CD14-positive monocyte (primary cell): ENCODE measurements at regions of chr19 and their contacts with region 1.

Region 1: GRCh38 chr19:39889872-39890545 is 43.8 kb upstream of the FBL start:
- DNase-seq: no peak
- H3K4me3 ChIP-seq: no peak overlapping the region
- H3K4me3 Mint-ChIP-seq: no peak overlapping the region
- H3K27ac ChIP-seq: no peak overlapping the region
- H3K27ac Mint-ChIP-seq: no peak overlapping the region
- H3K4me1 ChIP-seq: no peaks in the 10 kb centered on the region
- H3K4me1 Mint-ChIP-seq: no peaks in the 10 kb centered on the region
- H3K27me3 ChIP-seq: peaks cover 0 to 16% of the 10 kb centered on the region in 2 donors
- H3K27me3 Mint-ChIP-seq: peaks cover 30 to 38% (median 32%) of the 10 kb centered on the region in 3 donors
- CTCF ChIP-seq: no peak

Region 2: GRCh38 chr19:39792999-39793546 is 96.9 kb before region 1 on chr19:
- intact Hi-C with region 1: no loop called
- DNase-seq: peak; percentile 42 to 56 (median 53)
- H3K4me3 ChIP-seq: peak overlapping the region; percentile 34 to 83 (median 47)
- H3K4me3 Mint-ChIP-seq: peak overlapping the region; percentile 79
- H3K27ac ChIP-seq: no peak overlapping the region
- H3K27ac Mint-ChIP-seq: no peak overlapping the region
- H3K4me1 ChIP-seq: peaks cover 0 to 6% of the 10 kb centered on the region in 2 donors
- H3K4me1 Mint-ChIP-seq: peaks cover 6% of the 10 kb centered on the region
- H3K27me3 ChIP-seq: peaks cover 0 to 2% of the 10 kb centered on the region in 2 donors
- H3K27me3 Mint-ChIP-seq: peaks cover 7 to 24% (median 11%) of the 10 kb centered on the region in 3 donors
- CTCF ChIP-seq: peak; percentile 96

Region 3: DNA sequence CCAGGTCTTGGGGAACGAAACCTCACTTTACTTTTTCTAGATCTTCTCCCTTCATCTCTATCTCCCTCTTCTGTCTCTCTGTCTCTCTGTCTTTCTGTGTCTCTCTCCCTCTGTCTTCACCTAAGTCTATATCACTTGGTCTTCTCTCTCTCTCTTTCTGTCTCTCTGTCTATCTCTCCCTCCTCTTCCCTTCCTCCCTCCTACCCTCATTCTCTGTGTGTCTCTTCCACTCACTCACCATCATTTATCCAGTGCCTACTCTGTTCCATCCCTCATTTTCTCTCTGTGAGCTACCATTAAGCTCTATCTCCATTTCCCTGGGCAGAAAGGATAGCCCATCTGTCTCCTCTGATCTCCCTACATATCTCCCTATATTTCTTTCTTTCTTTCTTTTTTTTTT is 11.6 kb before region 1 on chr19:
- intact Hi-C with region 1: loop called in 1 of 2 experiments (anchors 2 kb)
- DNase-seq: no peak
- H3K4me3 ChIP-seq: no peak overlapping the region
- H3K4me3 Mint-ChIP-seq: no peak overlapping the region
- H3K27ac ChIP-seq: no peak overlapping the region
- H3K27ac Mint-ChIP-seq: no peak overlapping the region
- H3K4me1 ChIP-seq: no peaks in the 10 kb centered on the region
- H3K4me1 Mint-ChIP-seq: no peaks in the 10 kb centered on the region
- H3K27me3 ChIP-seq: no peaks in the 10 kb centered on the region
- H3K27me3 Mint-ChIP-seq: peaks cover 3 to 25% (median 3%) of the 10 kb centered on the region in 3 donors
- CTCF ChIP-seq: no peak